ENCODE measurements at regions of chr17 and their contacts with region 1.

Region 1: GRCh38 chr17:37147301-37147812 is 198.6 kb downstream of the AATF start:
- DNase-seq: no peak
- H3K4me3 ChIP-seq: no peak overlapping the region
- H3K27ac ChIP-seq: no peak overlapping the region
- H3K4me1 ChIP-seq: peaks cover 0 to 8% (median 3%) of the 10 kb centered on the region in 4 experiments; a peak in 6 of 7 replicates
- H3K27me3 ChIP-seq: no peaks in the 10 kb centered on the region
- CTCF ChIP-seq: no peak
- EP300 ChIP-seq: no peak
- POLR2A ChIP-seq: no peak
- RAD21 ChIP-seq: no peak

Region 2: GRCh38 chr17:37137070-37137610 is 10.2 kb before region 1 on chr17:
- CTCF ChIA-PET with region 1: interaction called, 12 read pairs
- POLR2A ChIA-PET with region 1: interaction called, 3 read pairs
- DNase-seq: no peak
- H3K4me3 ChIP-seq: no peak overlapping the region
- H3K27ac ChIP-seq: no peak overlapping the region
- H3K4me1 ChIP-seq: peaks cover 0 to 10% (median 9%) of the 10 kb centered on the region in 4 experiments; a peak in 4 of 7 replicates
- H3K27me3 ChIP-seq: no peaks in the 10 kb centered on the region
- CTCF ChIP-seq: peak in 1 of 3 experiments; percentile 10; a peak in 2 of 4 replicates
- EP300 ChIP-seq: no peak
- POLR2A ChIP-seq: no peak
- RAD21 ChIP-seq: peak; percentile 10 to 29; a peak in 1 of 4 replicates

Region 3: DNA sequence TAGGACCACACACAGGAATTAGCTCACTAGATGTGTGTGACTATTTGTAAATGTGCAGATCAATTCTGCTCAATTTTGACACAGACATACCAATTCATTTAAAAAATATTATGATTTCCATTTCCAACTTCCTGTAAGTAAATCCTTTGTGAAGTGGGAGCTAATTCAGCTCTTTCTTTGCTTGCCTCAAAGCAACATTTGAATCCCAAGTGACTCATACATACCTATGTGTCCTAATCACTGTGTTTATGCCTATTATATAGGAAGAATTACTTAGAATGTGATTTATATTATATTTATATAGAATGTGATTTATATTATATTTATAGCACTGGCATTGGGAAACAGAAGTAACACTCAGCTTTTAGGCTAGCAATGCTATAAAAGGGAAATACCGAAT is 32.5 kb after region 1 on chr17:
- CTCF ChIA-PET with region 1: no interaction called
- POLR2A ChIA-PET with region 1: no interaction called
- DNase-seq: no peak
- H3K4me3 ChIP-seq: no peak overlapping the region
- H3K27ac ChIP-seq: no peak overlapping the region
- H3K4me1 ChIP-seq: no peaks in the 10 kb centered on the region
- H3K27me3 ChIP-seq: no peaks in the 10 kb centered on the region
- CTCF ChIP-seq: no peak
- EP300 ChIP-seq: no peak
- POLR2A ChIP-seq: no peak
- RAD21 ChIP-seq: no peak